ENCODE measurements at regions of chr5 and their contacts with region 1.

Region 1: GRCh38 chr5:148583429-148583965 is 70.8 kb downstream of the HTR4 start:
- DNase-seq: peak; percentile 49
- ATAC-seq: peak; percentile 67
- H3K4me3 ChIP-seq: no peak overlapping the region
- H3K27ac ChIP-seq: no peak overlapping the region
- H3K4me1 ChIP-seq: no peaks in the 10 kb centered on the region
- H3K27me3 ChIP-seq: peaks cover 59% of the 10 kb centered on the region
- CTCF ChIP-seq: no peak

Region 2: GRCh38 chr5:148523139-148523538 is 60.4 kb before region 1 on chr5:
- CTCF ChIA-PET with region 1: no interaction called
- POLR2A ChIA-PET with region 1: interaction called, 10 read pairs
- intact Hi-C with region 1: no loop called
- DNase-seq: peak; percentile 44
- ATAC-seq: peak; percentile 86
- H3K4me3 ChIP-seq: no peak overlapping the region
- H3K27ac ChIP-seq: no peak overlapping the region
- H3K4me1 ChIP-seq: no peaks in the 10 kb centered on the region
- H3K27me3 ChIP-seq: peaks cover 83% of the 10 kb centered on the region
- CTCF ChIP-seq: peak; percentile 59